ENCODE measurements at regions of chr5 and their contacts with region 1.

Region 1: DNA sequence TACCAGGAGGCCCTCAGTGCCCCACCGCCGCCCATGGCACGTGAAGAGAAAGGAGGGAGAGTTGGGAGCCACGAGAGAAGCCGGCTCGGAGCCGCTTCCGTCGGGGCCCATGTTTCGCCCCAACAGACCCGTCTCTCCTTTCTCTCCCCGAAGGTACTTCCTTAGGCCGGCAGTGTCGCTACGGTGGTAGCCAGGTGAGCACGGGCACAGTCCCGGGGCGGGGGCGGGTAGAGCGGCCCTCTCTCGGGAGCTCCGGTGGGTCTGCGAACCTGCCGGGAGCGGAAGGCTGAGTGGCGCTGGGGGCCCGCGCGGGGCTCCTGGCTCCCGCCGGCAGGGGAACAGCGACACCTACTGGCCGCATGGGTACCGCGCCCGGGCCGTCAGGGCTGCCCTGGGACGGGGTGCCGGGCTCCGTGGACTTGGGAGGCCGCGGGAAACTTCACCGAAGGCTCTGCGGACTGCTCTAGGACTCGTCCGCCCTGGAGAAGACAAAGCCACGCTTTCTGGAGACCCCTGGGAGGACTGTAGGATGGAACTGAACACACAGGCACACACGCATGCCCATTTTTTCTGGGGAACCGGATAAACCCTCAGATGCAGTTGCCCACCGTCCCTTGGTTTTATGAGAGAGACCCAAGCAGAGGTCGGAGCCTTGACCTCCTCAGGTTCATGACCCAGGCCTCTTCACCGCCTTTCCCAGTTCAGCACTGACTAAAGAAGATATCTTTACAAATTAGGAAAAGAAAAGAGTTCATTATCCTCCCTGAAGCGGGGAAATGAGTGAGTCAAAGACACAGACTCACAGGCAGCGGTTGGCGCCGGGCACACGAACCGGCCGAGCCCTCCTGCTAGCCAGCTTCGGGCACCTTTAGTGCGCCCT is 202.5 kb downstream of the MEF2C start:
- DNase-seq: peak; percentile 61 to 77 (median 70)
- ATAC-seq: peak; percentile 90
- H3K4me3 ChIP-seq: peak overlapping the region in 1 of 2 donors; percentile 13
- H3K27ac ChIP-seq: no peak overlapping the region
- H3K4me1 ChIP-seq: peaks cover 34% of the 10 kb centered on the region
- H3K27me3 ChIP-seq: peaks cover 0 to 55% of the 10 kb centered on the region in 2 donors
- CTCF ChIP-seq: peak; percentile 75 to 99 (median 87)
- POLR2A ChIP-seq: no peak

Region 2: GRCh38 chr5:87775228-87775627 is 905.3 kb before region 1 on chr5:
- intact Hi-C with region 1: loop called (anchors 5 kb)
- DNase-seq: no peak
- ATAC-seq: no peak
- H3K4me3 ChIP-seq: no peak overlapping the region
- H3K27ac ChIP-seq: no peak overlapping the region
- H3K4me1 ChIP-seq: no peaks in the 10 kb centered on the region
- H3K27me3 ChIP-seq: no peaks in the 10 kb centered on the region
- CTCF ChIP-seq: no peak
- POLR2A ChIP-seq: no peak

Region 3: GRCh38 chr5:88140856-88141752 is 539.4 kb before region 1 on chr5:
- intact Hi-C with region 1: loop called (anchors 10 kb)
- DNase-seq: peak; percentile 94 to 97 (median 97)
- ATAC-seq: peak; percentile 98
- H3K4me3 ChIP-seq: peak overlapping the region; percentile 16 to 25
- H3K27ac ChIP-seq: peak overlapping the region in 2 of 4 donors; percentile 15 to 33
- H3K4me1 ChIP-seq: peaks cover 42% of the 10 kb centered on the region
- H3K27me3 ChIP-seq: peaks cover 0 to 15% of the 10 kb centered on the region in 2 donors
- CTCF ChIP-seq: peak; percentile 64 to 87 (median 80)
- POLR2A ChIP-seq: peak in 2 of 3 donors; percentile 26 to 36

Region 4: DNA sequence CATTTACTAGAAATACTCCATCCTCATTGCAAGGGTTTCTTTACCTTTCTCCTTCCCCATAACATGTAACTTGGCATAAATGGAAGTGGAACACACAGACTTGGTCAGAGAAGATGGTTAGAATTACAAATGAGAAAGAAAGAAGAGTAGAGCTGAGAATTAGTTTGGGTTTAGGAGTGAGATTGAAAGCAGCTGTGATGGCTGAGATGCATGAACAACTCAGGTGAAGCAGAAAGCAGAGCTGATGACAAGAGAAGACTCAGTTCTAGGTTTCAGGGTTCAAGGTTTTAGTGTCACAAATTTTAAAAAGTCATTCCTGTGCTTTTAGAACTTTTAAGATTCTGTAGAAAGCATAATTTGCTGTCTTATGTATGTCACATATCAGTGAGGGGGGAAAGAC is 465.8 kb before region 1 on chr5:
- intact Hi-C with region 1: no loop called
- DNase-seq: no peak
- ATAC-seq: no peak
- H3K4me3 ChIP-seq: no peak overlapping the region
- H3K27ac ChIP-seq: no peak overlapping the region
- H3K4me1 ChIP-seq: no peaks in the 10 kb centered on the region
- H3K27me3 ChIP-seq: no peaks in the 10 kb centered on the region
- CTCF ChIP-seq: no peak
- POLR2A ChIP-seq: no peak

Measured in body of pancreas (tissue), 4 donors.